Left ventricle myocardium inferior (tissue), 1 donor: ENCODE measurements at regions of chr20 and their contacts with region 1.

Region 1: DNA sequence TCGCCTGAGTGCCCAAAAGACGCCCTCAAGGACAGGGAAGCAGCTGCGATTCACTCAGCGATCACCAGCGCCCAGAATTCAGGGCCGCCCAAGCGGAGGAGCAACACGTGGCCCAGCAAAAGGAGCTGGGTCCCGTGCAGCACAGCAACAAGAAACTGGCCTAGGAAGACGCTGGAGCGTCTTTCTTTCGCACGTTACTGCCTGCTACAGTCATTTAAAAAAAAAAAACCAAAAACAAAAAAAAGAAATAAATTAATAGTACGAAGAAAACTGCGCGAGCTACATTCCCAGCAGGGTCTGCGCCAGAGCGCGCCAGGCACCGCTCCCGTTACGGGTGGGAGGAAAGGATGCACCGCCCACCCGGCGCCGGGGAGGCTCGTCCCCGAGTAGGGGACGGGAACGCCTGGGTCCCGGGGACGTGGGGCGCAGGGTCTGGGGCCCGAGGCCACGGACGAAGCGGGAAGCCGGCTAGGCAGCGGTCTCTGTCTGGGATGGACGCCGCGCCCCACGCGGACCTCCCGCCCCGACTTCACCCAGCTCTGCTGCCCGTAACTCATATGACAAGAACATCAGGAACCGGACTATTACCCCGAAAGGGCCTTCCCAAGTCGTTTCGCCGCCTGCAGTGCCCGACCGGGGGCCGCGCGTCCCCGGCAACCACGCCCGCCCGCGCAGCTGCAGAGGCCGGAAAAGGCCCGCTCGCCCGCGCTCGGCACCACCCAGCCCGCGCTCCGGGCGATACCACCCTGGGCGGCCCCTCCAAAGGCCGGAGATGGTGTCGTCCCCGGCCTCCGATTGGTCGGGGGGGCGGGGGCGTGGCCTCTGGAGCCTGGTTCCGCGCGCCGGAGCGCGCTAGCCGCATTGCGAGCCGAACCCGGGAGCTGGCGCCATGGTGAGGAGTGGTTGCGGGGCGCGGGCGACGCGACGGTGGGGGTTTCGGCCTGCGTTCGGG is at the start of gene NOP56:
- DNase-seq: peak; percentile 92
- H3K4me3 ChIP-seq: peak within 1 kb of the TSS; percentile 95
- H3K27ac ChIP-seq: peak within 1 kb of the TSS; percentile 98
- H3K4me1 ChIP-seq: peaks cover 35% of the 10 kb centered on the region
- H3K27me3 ChIP-seq: no peaks in the 10 kb centered on the region
- CTCF ChIP-seq: no peak
- total RNA-seq, gene NOP56: 47.3 TPM

Region 2: GRCh38 chr20:2523919-2524708 is 127.9 kb before region 1 on chr20:
- intact Hi-C with region 1: loop called (anchors 5 kb)
- DNase-seq: peak; percentile 88
- H3K4me3 ChIP-seq: peak overlapping the region; percentile 92
- H3K27ac ChIP-seq: peak overlapping the region; percentile 90
- H3K4me1 ChIP-seq: peaks cover 27% of the 10 kb centered on the region
- H3K27me3 ChIP-seq: no peaks in the 10 kb centered on the region
- CTCF ChIP-seq: peak; percentile 97